ENCODE measurements at regions of chr18 and their contacts with region 1.

Region 1: GRCh38 chr18:50878345-50879301 is at the start of gene ME2:
- DNase-seq: peak; percentile 93
- H3K4me3 ChIP-seq: peak within 1 kb of the TSS; percentile 69 to 98 (median 90)
- H3K27ac ChIP-seq: peak within 1 kb of the TSS; percentile 63
- H3K4me1 ChIP-seq: peaks cover 10% of the 10 kb centered on the region
- H3K27me3 ChIP-seq: no peaks in the 10 kb centered on the region
- CTCF ChIP-seq: no peak
- total RNA-seq, gene ME2: 34.3 to 41.5 TPM

Region 2: GRCh38 chr18:50836521-50836957 is 42.1 kb before region 1 on chr18:
- CTCF ChIA-PET with region 1: no interaction called
- dilution Hi-C with region 1: no loop called
- in situ Hi-C with region 1: no loop called
- intact Hi-C with region 1: loop called (anchors 5 kb)
- DNase-seq: peak; percentile 81
- H3K4me3 ChIP-seq: no peak overlapping the region
- H3K27ac ChIP-seq: no peak overlapping the region
- H3K4me1 ChIP-seq: peaks cover 19% of the 10 kb centered on the region
- H3K27me3 ChIP-seq: no peaks in the 10 kb centered on the region
- CTCF ChIP-seq: no peak

Region 3: DNA sequence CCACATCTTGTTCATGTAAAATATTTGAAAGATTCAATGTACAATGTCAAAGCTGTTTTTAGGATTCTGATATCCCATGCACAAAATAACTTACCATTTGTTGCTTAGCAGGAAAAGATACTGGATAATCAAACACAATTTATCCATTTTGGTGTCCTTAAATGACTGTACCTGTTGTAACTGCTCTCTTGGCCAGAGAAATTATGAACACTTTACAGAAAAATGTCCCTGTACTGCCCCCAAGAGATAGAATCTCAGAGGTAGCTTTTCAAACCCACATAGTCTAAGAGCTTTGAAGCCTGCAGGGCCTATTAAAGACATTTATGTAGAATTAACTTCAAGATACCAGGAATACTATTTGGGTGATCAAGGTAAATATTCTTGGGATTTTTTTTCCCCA is 11.9 kb before region 1 on chr18:
- CTCF ChIA-PET with region 1: no interaction called
- dilution Hi-C with region 1: no loop called
- in situ Hi-C with region 1: no loop called
- intact Hi-C with region 1: loop called (anchors 1 kb)
- DNase-seq: no peak
- H3K4me3 ChIP-seq: no peak overlapping the region
- H3K27ac ChIP-seq: no peak overlapping the region
- H3K4me1 ChIP-seq: peaks cover 32% of the 10 kb centered on the region
- H3K27me3 ChIP-seq: no peaks in the 10 kb centered on the region
- CTCF ChIP-seq: peak; percentile 13 to 29

Region 4: GRCh38 chr18:50933684-50934083 is 55.1 kb after region 1 on chr18:
- CTCF ChIA-PET with region 1: no interaction called
- dilution Hi-C with region 1: no loop called
- in situ Hi-C with region 1: no loop called
- intact Hi-C with region 1: no loop called
- DNase-seq: no peak
- H3K4me3 ChIP-seq: no peak overlapping the region
- H3K27ac ChIP-seq: no peak overlapping the region
- H3K4me1 ChIP-seq: no peaks in the 10 kb centered on the region
- H3K27me3 ChIP-seq: no peaks in the 10 kb centered on the region
- CTCF ChIP-seq: no peak

Region 5: GRCh38 chr18:50967714-50968661 is 89.4 kb after region 1 on chr18 and contains the start of gene ELAC1:
- CTCF ChIA-PET with region 1: no interaction called
- dilution Hi-C with region 1: no loop called
- in situ Hi-C with region 1: no loop called
- intact Hi-C with region 1: loop called (anchors 2 kb)
- DNase-seq: peak; percentile 79
- H3K4me3 ChIP-seq: peak within 1 kb of the TSS; percentile 78 to 96 (median 91)
- H3K27ac ChIP-seq: peak within 1 kb of the TSS; percentile 91
- H3K4me1 ChIP-seq: peaks cover 16% of the 10 kb centered on the region
- H3K27me3 ChIP-seq: no peaks in the 10 kb centered on the region
- CTCF ChIP-seq: no peak
- total RNA-seq, gene ELAC1: 5.5 to 11.2 TPM

Region 6: DNA sequence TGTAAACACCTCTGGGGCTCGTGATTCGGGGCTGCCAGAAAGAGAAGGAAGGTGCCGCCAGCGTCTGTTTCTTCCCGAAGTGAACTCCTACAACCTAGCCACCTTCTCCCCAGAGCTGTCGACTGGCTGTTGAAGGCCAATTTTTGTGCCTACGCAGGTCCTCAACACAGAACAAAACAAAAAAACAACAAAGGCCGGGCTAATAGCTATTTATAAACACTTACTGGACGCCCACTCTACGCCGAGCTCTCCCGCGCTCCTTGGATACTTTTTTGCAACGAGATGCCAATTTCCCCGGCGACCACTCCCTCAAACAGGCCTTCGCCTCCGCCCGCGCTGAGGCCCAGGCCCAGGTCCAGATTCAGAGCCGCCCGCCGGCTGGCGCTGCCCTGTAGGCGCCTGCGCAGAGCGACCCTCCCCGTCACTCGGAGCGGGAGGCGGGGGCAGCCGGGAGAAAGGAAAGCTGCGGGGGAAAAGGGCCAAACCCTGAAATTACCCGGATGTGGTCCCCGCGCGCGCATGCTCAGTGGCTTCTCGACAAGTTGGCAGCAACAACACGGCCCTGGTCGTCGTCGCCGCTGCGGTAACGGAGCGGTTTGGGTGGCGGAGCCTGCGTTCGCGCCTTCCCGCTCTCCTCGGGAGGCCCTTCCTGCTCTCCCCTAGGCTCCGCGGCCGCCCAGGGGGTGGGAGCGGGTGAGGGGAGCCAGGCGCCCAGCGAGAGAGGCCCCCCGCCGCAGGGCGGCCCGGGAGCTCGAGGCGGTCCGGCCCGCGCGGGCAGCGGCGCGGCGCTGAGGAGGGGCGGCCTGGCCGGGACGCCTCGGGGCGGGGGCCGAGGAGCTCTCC is 151.3 kb after region 1 on chr18 and contains the start of gene SMAD4:
- CTCF ChIA-PET with region 1: no interaction called
- dilution Hi-C with region 1: no loop called
- in situ Hi-C with region 1: no loop called
- intact Hi-C with region 1: loop called (anchors 2 kb)
- DNase-seq: peak; percentile 93
- H3K4me3 ChIP-seq: peak within 1 kb of the TSS; percentile 65 to 90 (median 72)
- H3K27ac ChIP-seq: peak within 1 kb of the TSS; percentile 83
- H3K4me1 ChIP-seq: peaks cover 6% of the 10 kb centered on the region
- H3K27me3 ChIP-seq: no peaks in the 10 kb centered on the region
- CTCF ChIP-seq: no peak
- total RNA-seq, gene SMAD4: 70.6 to 111 TPM

Region 7: GRCh38 chr18:51051105-51051712 is 172.6 kb after region 1 on chr18:
- CTCF ChIA-PET with region 1: no interaction called
- dilution Hi-C with region 1: no loop called
- in situ Hi-C with region 1: no loop called
- intact Hi-C with region 1: loop called (anchors 5 kb)
- DNase-seq: peak; percentile 27
- H3K4me3 ChIP-seq: no peak overlapping the region
- H3K27ac ChIP-seq: no peak overlapping the region
- H3K4me1 ChIP-seq: no peaks in the 10 kb centered on the region
- H3K27me3 ChIP-seq: no peaks in the 10 kb centered on the region
- CTCF ChIP-seq: peak; percentile 79 to 83

Measured in mammary epithelial cell (primary cell).